ENCODE measurements at regions of chr18 and their contacts with region 1.

Region 1: GRCh38 chr18:58768293-58768974 is 96.2 kb upstream of the ZNF532 start:
- DNase-seq: peak; percentile 84
- H3K4me3 ChIP-seq: peak overlapping the region in 3 of 4 donors; percentile 26 to 40 (median 28)
- H3K27ac ChIP-seq: no peak overlapping the region
- H3K4me1 ChIP-seq: peaks cover 0 to 14% (median 10%) of the 10 kb centered on the region in 4 donors
- H3K27me3 ChIP-seq: no peaks in the 10 kb centered on the region
- CTCF ChIP-seq: peak; percentile 54 to 79 (median 66)
- EP300 ChIP-seq: no peak
- POLR2A ChIP-seq: no peak

Region 2: DNA sequence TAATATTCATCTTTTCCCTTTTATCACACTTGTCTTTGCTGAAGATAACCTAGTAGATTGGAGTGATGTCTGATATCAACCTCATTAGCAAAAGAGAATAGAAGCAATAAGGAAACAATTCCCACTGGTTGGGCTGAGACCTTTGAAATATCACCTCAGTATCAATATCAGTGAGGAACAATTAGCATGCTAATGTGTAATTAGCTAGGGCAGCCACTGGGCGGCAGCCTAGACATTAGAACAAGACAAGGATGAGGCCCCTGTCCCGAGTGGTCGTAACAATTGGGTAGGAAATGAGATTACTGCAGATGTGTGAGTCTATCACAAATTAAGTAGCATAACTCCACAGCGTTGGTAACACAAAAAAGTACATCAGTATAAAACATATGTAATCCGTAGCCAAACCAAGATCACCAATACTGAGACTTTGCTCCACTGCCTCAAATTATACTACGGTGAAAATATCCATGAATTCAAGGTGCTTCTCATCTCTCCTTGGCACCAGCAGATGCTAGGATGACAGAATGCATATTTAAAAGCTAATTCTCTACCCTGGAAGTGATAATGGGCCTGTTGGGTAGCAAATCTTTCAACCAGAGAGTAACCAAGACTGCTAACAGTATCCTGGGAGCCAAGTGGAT is 238.6 kb before region 1 on chr18:
- intact Hi-C with region 1: loop called (anchors 1 kb)
- DNase-seq: no peak
- H3K4me3 ChIP-seq: no peak overlapping the region
- H3K27ac ChIP-seq: no peak overlapping the region
- H3K4me1 ChIP-seq: no peaks in the 10 kb centered on the region
- H3K27me3 ChIP-seq: no peaks in the 10 kb centered on the region
- CTCF ChIP-seq: peak; percentile 51 to 80 (median 78)
- EP300 ChIP-seq: no peak
- POLR2A ChIP-seq: no peak

Measured in sigmoid colon (tissue), 7 donors.